ENCODE measurements at regions of chr10 and their contacts with region 1.

Region 1: DNA sequence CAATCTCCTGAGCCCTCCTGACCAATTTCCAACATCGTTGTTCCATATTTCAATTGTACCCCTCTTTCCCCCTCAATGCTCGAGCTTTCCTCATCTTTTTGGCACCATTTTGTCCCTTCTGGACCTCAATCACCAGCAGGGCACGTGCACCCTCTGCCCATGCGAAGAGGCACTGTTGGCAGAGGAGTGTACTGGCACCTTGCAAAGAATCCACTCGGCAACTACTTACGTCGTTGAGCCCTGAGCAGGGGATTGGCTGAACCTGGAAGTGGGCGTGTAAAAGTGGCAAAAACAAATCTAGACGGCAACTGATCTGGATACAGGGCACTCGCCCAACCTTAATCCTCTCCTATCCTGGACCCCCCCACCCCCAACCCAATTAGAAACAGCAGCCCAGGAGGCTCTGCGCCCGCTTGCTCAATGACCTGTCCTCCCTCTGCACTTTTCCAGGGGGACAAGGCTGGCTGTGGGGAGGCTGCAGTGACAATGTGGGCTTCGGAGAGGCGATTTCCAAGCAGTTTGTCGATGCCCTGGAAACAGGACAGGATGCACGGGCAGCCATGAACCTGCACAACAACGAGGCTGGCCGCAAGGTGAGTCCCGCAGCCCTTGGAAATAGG is 18.8 kb downstream of the WNT8B start:
- DNase-seq: peak; percentile 97
- H3K4me3 ChIP-seq: peak overlapping the region; percentile 13 to 48 (median 27)
- H3K27ac ChIP-seq: no peak overlapping the region
- H3K4me1 ChIP-seq: peaks cover 12% of the 10 kb centered on the region
- H3K27me3 ChIP-seq: peaks cover 35 to 40% of the 10 kb centered on the region in 2 experiments
- CTCF ChIP-seq: peak in 1 of 2 donors; percentile 2
- POLR2A ChIP-seq: no peak

Region 2: DNA sequence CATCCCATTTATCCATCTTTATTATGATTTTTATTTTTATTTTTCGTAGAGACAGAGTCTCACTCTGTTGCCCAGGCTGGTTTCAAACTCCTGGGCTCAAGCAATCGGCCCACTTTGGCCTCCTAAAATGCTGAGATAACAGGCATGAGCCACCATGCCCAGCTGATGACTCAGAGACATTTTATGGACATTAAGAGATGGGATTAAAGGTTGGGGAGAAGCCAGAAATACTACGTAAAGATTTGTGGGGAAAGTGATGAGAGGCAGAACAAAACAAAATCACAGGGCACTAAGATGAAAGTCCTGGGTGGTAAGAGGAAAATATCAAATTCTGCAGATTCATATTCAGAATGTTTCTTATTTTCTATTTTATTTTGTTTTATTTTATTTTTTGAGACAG is 11.2 kb before region 1 on chr10:
- CTCF ChIA-PET with region 1: interaction called, 14 read pairs
- POLR2A ChIA-PET with region 1: no interaction called
- dilution Hi-C with region 1: no loop called
- intact Hi-C with region 1: no loop called
- DNase-seq: no peak
- H3K4me3 ChIP-seq: no peak overlapping the region
- H3K27ac ChIP-seq: no peak overlapping the region
- H3K4me1 ChIP-seq: no peaks in the 10 kb centered on the region
- H3K27me3 ChIP-seq: peaks cover 24 to 36% of the 10 kb centered on the region in 2 experiments
- CTCF ChIP-seq: no peak
- POLR2A ChIP-seq: no peak

Region 3: GRCh38 chr10:100496567-100496966 is 15.0 kb after region 1 on chr10:
- CTCF ChIA-PET with region 1: interaction called, 37 read pairs
- POLR2A ChIA-PET with region 1: interaction called, 3 read pairs
- dilution Hi-C with region 1: no loop called
- intact Hi-C with region 1: no loop called
- DNase-seq: no peak
- H3K4me3 ChIP-seq: no peak overlapping the region
- H3K27ac ChIP-seq: no peak overlapping the region
- H3K4me1 ChIP-seq: no peaks in the 10 kb centered on the region
- H3K27me3 ChIP-seq: no peaks in the 10 kb centered on the region
- CTCF ChIP-seq: no peak
- POLR2A ChIP-seq: no peak

Region 4: GRCh38 chr10:100535715-100536353 is 54.3 kb after region 1 on chr10 and contains the start of gene HIF1AN:
- CTCF ChIA-PET with region 1: interaction called, 14 read pairs
- POLR2A ChIA-PET with region 1: no interaction called
- dilution Hi-C with region 1: no loop called
- intact Hi-C with region 1: no loop called
- DNase-seq: peak; percentile 93
- H3K4me3 ChIP-seq: peak within 1 kb of the TSS; percentile 37 to 65 (median 65)
- H3K27ac ChIP-seq: peak within 1 kb of the TSS; percentile 18
- H3K4me1 ChIP-seq: peaks cover 17% of the 10 kb centered on the region
- H3K27me3 ChIP-seq: no peaks in the 10 kb centered on the region
- CTCF ChIP-seq: peak; percentile 94 to 97
- POLR2A ChIP-seq: peak; percentile 88
- total RNA-seq, gene HIF1AN: 33.8 and 34.0 TPM in 2 replicates

Region 5: GRCh38 chr10:100759331-100759730 is 277.8 kb after region 1 on chr10:
- CTCF ChIA-PET with region 1: no interaction called
- POLR2A ChIA-PET with region 1: no interaction called
- dilution Hi-C with region 1: no loop called
- intact Hi-C with region 1: no loop called
- DNase-seq: no peak
- H3K4me3 ChIP-seq: no peak overlapping the region
- H3K27ac ChIP-seq: no peak overlapping the region
- H3K4me1 ChIP-seq: no peaks in the 10 kb centered on the region
- H3K27me3 ChIP-seq: peaks cover 31 to 51% of the 10 kb centered on the region in 2 experiments
- CTCF ChIP-seq: no peak
- POLR2A ChIP-seq: no peak

Measured in endothelial cell of umbilical vein (primary cell).